Activated CD8-positive, alpha-beta T cell treated with anti-CD3 and anti-CD28 coated beads, Interleukin-2, amount 10 ng/mL, durations not matched to agents 7 days and 5 days (primary cell): ENCODE measurements at regions of chr6 and their contacts with region 1.

Region 1: GRCh38 chr6:134640975-134641429 is 308.9 kb downstream of the ALDH8A1 start:
- DNase-seq: peak; percentile 80
- ATAC-seq: peak; percentile 87
- H3K4me3 Mint-ChIP-seq: no peak overlapping the region
- H3K27ac Mint-ChIP-seq: no peak overlapping the region
- H3K4me1 Mint-ChIP-seq: peaks cover 12% of the 10 kb centered on the region
- H3K27me3 Mint-ChIP-seq: no peaks in the 10 kb centered on the region

Region 2: DNA sequence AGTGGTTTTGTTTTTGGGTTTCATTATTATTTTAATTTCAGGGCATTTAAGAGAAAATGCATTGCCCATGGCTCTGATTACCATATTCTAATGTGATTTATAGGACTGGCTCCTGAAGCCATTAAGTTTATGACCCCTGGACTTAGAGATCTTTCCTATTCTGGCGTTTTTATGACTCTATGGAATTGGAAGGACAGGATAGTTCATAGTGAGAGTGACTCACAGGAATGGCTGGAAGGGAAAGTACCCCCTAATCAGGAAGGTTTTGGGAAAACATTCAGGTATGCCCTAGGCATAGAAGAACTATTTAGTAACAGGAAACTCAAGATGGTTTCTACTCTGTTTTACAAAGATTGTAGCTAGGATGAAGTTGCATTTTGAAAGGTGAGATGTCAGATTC is 480.0 kb before region 1 on chr6:
- CTCF ChIA-PET with region 1: interaction called, 24 read pairs
- POLR2A ChIA-PET with region 1: no interaction called
- DNase-seq: no peak
- ATAC-seq: no peak
- H3K4me3 Mint-ChIP-seq: no peak overlapping the region
- H3K27ac Mint-ChIP-seq: no peak overlapping the region
- H3K4me1 Mint-ChIP-seq: no peaks in the 10 kb centered on the region
- H3K27me3 Mint-ChIP-seq: no peaks in the 10 kb centered on the region

Region 3: GRCh38 chr6:134174672-134175198 is 466.3 kb before region 1 on chr6:
- CTCF ChIA-PET with region 1: interaction called, 60 read pairs
- POLR2A ChIA-PET with region 1: interaction called, 5 read pairs
- DNase-seq: peak; percentile 92
- ATAC-seq: peak; percentile 77
- H3K4me3 Mint-ChIP-seq: peak overlapping the region; percentile 99
- H3K27ac Mint-ChIP-seq: peak overlapping the region; percentile 99
- H3K4me1 Mint-ChIP-seq: peaks cover 71% of the 10 kb centered on the region
- H3K27me3 Mint-ChIP-seq: no peaks in the 10 kb centered on the region

Region 4: GRCh38 chr6:134272374-134272773 is 368.6 kb before region 1 on chr6:
- CTCF ChIA-PET with region 1: interaction called, 11 read pairs
- POLR2A ChIA-PET with region 1: no interaction called
- DNase-seq: no peak
- ATAC-seq: peak; percentile 37
- H3K4me3 Mint-ChIP-seq: peak overlapping the region; percentile 6
- H3K27ac Mint-ChIP-seq: peak overlapping the region; percentile 71
- H3K4me1 Mint-ChIP-seq: peaks cover 37% of the 10 kb centered on the region
- H3K27me3 Mint-ChIP-seq: no peaks in the 10 kb centered on the region

Region 5: GRCh38 chr6:134436281-134436815 is 204.7 kb before region 1 on chr6:
- CTCF ChIA-PET with region 1: interaction called, 22 read pairs
- POLR2A ChIA-PET with region 1: no interaction called
- DNase-seq: peak; percentile 62
- ATAC-seq: peak; percentile 87
- H3K4me3 Mint-ChIP-seq: peak overlapping the region; percentile 34
- H3K27ac Mint-ChIP-seq: peak overlapping the region; percentile 72
- H3K4me1 Mint-ChIP-seq: peaks cover 29% of the 10 kb centered on the region
- H3K27me3 Mint-ChIP-seq: no peaks in the 10 kb centered on the region

Region 6: GRCh38 chr6:134822920-134823709 is 182.1 kb after region 1 on chr6:
- CTCF ChIA-PET with region 1: interaction called, 10 read pairs
- POLR2A ChIA-PET with region 1: no interaction called
- DNase-seq: peak; percentile 45
- ATAC-seq: peak; percentile 90
- H3K4me3 Mint-ChIP-seq: no peak overlapping the region
- H3K27ac Mint-ChIP-seq: no peak overlapping the region
- H3K4me1 Mint-ChIP-seq: no peaks in the 10 kb centered on the region
- H3K27me3 Mint-ChIP-seq: peaks cover 6% of the 10 kb centered on the region